ENCODE measurements at regions of chr14 and their contacts with region 1.

Region 1: GRCh38 chr14:22986508-22987054 is 4.2 kb upstream of the AJUBA start:
- DNase-seq: peak; percentile 79
- H3K4me3 Mint-ChIP-seq: no peak overlapping the region
- H3K27ac Mint-ChIP-seq: no peak overlapping the region
- H3K4me1 Mint-ChIP-seq: no peaks in the 10 kb centered on the region
- H3K27me3 Mint-ChIP-seq: peaks cover 3% of the 10 kb centered on the region

Region 2: GRCh38 chr14:22822571-22823098 is 163.9 kb before region 1 on chr14:
- intact Hi-C with region 1: loop called (anchors 2 kb)
- DNase-seq: peak; percentile 52
- H3K4me3 Mint-ChIP-seq: peak overlapping the region; percentile 60
- H3K27ac Mint-ChIP-seq: no peak overlapping the region
- H3K4me1 Mint-ChIP-seq: peaks cover 35% of the 10 kb centered on the region
- H3K27me3 Mint-ChIP-seq: peaks cover 8% of the 10 kb centered on the region

Region 3: DNA sequence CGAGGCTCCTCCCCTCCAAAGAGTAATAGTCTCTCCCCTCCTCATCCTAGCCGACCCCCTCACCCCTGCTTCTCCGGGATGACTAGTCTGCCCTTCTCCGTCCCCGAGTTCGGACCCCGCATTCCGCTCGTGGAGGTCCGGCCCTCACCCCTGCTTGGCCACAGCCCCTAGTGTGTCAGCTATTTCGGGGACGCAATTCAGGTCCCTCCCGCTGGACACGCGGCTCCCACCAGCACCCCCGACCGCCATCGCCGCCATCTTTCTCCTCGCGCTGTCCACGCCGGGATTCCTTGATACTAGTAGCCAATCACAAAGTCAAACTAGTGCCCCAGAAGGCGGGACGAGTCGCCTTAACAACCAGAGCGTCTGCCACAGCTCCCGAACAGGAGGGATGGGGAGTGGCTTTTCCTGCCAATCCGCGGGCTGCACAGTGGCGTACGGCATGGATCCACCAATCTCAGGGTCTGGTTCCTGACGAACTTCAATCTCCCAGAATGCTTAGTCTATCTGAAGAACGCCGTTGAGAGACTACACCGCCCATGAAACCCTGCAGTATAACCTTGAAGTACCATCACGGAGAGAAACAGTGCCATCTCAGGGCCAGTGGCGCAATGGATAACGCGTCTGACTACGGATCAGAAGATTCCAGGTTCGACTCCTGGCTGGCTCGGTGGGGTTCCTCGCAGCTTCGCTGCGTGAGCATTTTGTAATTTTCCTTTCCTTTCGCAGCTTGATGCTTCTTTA is 57.3 kb before region 1 on chr14 and contains the start of gene PRMT5:
- intact Hi-C with region 1: loop called (anchors 1 kb)
- DNase-seq: peak; percentile 95
- H3K4me3 Mint-ChIP-seq: no peak within 1 kb of the TSS
- H3K27ac Mint-ChIP-seq: no peak within 1 kb of the TSS
- H3K4me1 Mint-ChIP-seq: peaks cover 32% of the 10 kb centered on the region
- H3K27me3 Mint-ChIP-seq: no peaks in the 10 kb centered on the region
- total RNA-seq, gene PRMT5: 174 and 180 TPM in 2 replicates

Region 4: DNA sequence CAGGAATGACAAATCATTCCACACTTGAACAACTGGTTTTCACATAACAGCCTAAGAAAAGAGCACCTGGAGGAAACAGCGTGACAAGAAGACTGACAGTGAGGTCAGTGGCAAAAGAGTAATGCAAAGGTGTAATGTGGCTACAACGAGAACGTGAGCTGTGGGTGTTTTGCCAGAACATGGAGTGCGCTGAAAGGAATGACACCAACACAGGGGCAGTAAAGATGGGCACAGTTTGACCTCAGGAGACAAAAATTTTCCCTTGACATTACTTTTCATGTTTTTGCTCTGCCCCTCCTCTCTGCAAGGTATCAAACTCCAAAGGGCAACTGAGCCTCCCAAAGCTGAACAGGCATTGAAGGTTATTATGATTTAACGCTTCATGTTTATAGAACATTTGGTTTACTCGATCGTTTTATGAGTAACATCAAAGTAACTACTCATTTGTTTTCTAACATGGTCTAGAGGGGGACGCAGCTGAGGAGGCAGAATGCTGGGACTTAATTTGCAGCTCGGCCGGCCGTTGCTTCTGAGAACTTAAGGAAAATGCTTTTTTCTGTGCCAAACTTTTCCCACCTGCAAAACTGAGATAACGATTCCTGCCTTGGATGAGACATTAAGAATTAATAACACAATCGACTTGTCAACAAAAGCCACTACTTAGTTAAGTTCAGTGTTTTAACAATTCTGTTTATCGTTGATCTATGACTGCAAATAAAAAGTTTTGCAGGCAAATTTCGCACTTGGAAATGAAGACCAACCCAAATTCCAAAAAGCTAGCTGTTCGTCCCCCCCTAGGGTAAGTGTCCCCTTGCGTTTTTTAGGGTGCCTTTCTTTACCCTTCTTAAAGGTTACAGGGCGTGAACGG is 30.6 kb before region 1 on chr14:
- intact Hi-C with region 1: loop called (anchors 1 kb)
- DNase-seq: no peak
- H3K4me3 Mint-ChIP-seq: peak overlapping the region; percentile 93
- H3K27ac Mint-ChIP-seq: peak overlapping the region; percentile 86
- H3K4me1 Mint-ChIP-seq: peaks cover 17% of the 10 kb centered on the region
- H3K27me3 Mint-ChIP-seq: peaks cover 3% of the 10 kb centered on the region

Region 5: DNA sequence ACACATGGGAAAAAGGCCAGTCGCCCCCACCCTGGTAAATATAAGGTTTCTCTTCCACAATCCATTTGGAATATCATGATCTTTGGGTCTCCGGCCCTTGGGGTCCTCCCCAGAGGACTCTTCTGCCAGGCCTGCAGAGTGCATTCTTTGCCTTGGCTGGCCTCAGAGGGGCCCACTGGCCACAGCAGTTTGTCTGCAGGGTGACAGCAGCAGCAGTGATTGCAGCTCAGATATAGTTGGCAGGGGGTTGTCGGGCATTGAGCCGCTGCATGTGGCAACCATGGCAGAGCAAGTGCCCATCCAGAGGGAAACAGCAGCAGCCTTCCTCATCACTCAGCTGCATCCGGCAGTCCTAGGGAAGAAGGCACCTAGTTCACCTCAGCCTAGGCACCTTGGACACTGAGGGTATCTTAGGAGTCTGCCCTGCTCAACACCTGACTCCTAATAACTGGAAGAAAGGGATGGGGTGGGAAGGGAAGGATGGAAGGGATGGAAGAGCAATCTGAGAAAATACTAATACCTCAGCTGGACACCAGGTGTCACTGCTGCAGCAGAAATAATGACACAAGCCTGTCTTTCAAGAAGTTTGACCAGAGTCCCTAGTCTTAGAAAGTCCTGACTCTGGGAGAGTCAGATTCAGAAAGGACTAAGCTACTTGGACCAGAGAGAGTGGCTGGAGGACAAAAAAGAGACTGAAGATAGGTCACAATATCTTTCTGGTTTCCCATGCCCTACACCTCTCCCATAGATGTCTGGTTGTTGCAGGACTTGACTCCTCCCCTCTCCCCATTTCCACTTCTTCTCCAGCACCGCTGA is 13.2 kb before region 1 on chr14:
- intact Hi-C with region 1: loop called (anchors 1 kb)
- DNase-seq: no peak
- H3K4me3 Mint-ChIP-seq: no peak overlapping the region
- H3K27ac Mint-ChIP-seq: no peak overlapping the region
- H3K4me1 Mint-ChIP-seq: no peaks in the 10 kb centered on the region
- H3K27me3 Mint-ChIP-seq: peaks cover 13% of the 10 kb centered on the region

Region 6: DNA sequence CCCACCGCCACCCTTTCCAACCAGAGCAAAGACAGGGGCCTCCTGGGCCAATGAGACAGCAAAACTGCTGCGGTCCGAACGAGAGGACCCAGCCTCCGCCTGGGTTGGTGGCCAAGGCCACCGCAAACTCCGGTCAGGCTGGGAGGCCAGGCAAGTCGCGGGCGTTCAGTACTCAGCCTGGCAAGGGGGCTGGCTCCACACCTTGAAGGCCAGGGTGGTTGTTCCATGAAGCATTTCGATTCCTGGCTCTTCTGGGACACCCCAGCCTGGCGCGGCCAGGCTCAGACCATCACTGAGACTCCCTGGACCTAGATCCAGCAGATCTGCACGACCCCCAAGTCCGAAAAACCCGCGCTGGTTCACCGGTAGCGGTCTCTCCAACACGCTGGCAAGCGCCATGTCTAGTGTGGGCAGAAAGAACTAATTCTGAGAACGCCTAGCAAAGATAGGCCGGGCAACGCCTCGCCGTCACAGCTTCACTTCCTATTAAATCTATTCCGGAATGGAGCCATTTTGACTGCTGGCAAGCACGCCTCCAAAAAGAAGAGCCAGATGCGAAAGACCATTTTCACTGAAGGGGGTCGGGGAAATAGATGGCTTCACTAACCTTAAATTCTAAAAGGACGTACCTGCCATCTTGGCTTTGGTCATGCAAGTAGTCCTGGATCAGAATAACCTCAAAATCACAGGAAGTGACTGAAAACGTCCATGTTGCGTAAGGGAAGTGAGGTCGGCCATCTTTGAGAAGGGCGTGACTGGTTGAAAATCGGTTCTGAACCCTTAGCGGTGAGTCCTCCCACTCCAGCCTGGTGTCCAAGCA is 48.1 kb after region 1 on chr14 and contains the start of gene PSMB5:
- intact Hi-C with region 1: loop called (anchors 1 kb)
- DNase-seq: peak; percentile 85
- H3K4me3 Mint-ChIP-seq: peak within 1 kb of the TSS; percentile 98
- H3K27ac Mint-ChIP-seq: peak within 1 kb of the TSS; percentile 98
- H3K4me1 Mint-ChIP-seq: peaks cover 28% of the 10 kb centered on the region
- H3K27me3 Mint-ChIP-seq: peaks cover 2% of the 10 kb centered on the region
- total RNA-seq, gene PSMB5: 144 and 148 TPM in 2 replicates